Right ventricle myocardium inferior (tissue), 1 donor: ENCODE measurements at regions of chr19 and their contacts with region 1.

Region 1: DNA sequence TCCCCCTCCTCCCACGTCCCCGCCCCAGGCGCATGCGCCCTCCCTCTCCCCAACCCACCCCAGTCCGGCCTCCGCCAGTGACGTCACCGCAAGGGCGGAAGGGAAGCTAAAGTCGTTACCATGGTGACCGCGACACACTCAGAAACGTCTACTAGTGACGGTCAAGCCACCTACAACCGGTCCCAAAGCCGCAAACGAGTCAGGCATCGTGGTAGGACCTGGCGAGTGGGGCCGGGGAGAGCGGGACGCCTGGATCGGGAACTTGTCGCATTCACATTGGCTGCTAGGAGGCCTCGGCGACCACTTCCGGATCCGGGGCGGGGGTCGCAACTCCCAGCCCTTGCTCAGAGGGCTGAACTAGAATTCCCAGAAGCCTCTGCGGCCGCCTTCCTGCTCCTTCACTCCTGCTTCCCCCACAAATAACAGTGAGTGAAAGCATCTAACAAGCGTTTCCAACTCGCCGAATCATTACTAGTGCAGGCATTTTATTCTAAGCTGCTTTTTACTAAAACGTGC is at the start of gene ZSCAN5A:
- DNase-seq: peak; percentile 99
- ATAC-seq: peak; percentile 93
- total RNA-seq, gene ZSCAN5A: 20.3 TPM

Region 2: GRCh38 chr19:55956389-55956788 is 358.2 kb before region 1 on chr19:
- intact Hi-C with region 1: no loop called
- DNase-seq: no peak
- ATAC-seq: no peak

Region 3: GRCh38 chr19:56140583-56141416 is 173.8 kb before region 1 on chr19 and contains the start of gene ZNF444:
- intact Hi-C with region 1: loop called (anchors 10 kb)
- DNase-seq: peak; percentile 98
- ATAC-seq: peak; percentile 96
- total RNA-seq, gene ZNF444: 29.1 TPM